Activated CD8-positive, alpha-beta memory T cell treated with anti-CD3 and anti-CD28 coated beads, Interleukin-2, amount 10 ng/mL, durations not matched to agents 7 days and 5 days (primary cell): ENCODE measurements at regions of chr11 and their contacts with region 1.

Region 1: GRCh38 chr11:59158206-59159068 is 13.5 kb upstream of the DTX4 start:
- DNase-seq: peak; percentile 73
- ATAC-seq: peak; percentile 95
- H3K4me3 Mint-ChIP-seq: no peak overlapping the region
- H3K27ac Mint-ChIP-seq: no peak overlapping the region
- H3K4me1 Mint-ChIP-seq: peaks cover 6% of the 10 kb centered on the region
- H3K27me3 Mint-ChIP-seq: peaks cover 16% of the 10 kb centered on the region

Region 2: DNA sequence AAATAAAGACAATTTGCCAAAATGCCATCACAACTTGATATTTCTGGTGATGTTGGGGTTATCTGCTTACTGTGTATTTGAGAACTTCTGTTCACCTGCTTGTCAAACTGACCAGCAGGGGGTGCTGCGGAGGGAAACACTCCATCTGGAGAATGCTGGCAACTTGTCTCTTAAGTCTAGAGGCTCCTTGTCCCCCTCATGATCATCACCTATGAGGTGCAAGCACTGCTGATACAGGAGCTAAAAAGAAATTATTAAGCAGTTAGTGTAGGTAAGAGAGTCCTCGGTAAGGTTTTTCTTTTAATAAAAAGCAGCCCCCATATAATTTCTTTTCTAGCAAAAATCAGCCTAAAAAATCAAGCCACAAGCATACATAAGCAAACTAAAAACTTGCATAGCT is 105.0 kb before region 1 on chr11:
- CTCF ChIA-PET with region 1: interaction called, 16 read pairs
- DNase-seq: peak; percentile 81
- ATAC-seq: peak; percentile 71
- H3K4me3 Mint-ChIP-seq: no peak overlapping the region
- H3K27ac Mint-ChIP-seq: no peak overlapping the region
- H3K4me1 Mint-ChIP-seq: peaks cover 4% of the 10 kb centered on the region
- H3K27me3 Mint-ChIP-seq: peaks cover 36% of the 10 kb centered on the region

Region 3: GRCh38 chr11:59106363-59107336 is 51.8 kb before region 1 on chr11 and contains the start of gene FAM111B:
- CTCF ChIA-PET with region 1: interaction called, 27 read pairs
- DNase-seq: peak; percentile 89
- ATAC-seq: peak; percentile 93
- H3K4me3 Mint-ChIP-seq: peak within 1 kb of the TSS; percentile 81
- H3K27ac Mint-ChIP-seq: peak within 1 kb of the TSS; percentile 80
- H3K4me1 Mint-ChIP-seq: peaks cover 66% of the 10 kb centered on the region
- H3K27me3 Mint-ChIP-seq: peaks cover 6% of the 10 kb centered on the region
- total RNA-seq, gene FAM111B: 42.7 to 46.5 TPM

Region 4: GRCh38 chr11:59135648-59136461 is 22.6 kb before region 1 on chr11:
- CTCF ChIA-PET with region 1: interaction called, 53 read pairs
- DNase-seq: peak; percentile 92
- ATAC-seq: peak; percentile 99
- H3K4me3 Mint-ChIP-seq: peak overlapping the region; percentile 3
- H3K27ac Mint-ChIP-seq: peak overlapping the region; percentile 71
- H3K4me1 Mint-ChIP-seq: peaks cover 22% of the 10 kb centered on the region
- H3K27me3 Mint-ChIP-seq: no peaks in the 10 kb centered on the region

Region 5: DNA sequence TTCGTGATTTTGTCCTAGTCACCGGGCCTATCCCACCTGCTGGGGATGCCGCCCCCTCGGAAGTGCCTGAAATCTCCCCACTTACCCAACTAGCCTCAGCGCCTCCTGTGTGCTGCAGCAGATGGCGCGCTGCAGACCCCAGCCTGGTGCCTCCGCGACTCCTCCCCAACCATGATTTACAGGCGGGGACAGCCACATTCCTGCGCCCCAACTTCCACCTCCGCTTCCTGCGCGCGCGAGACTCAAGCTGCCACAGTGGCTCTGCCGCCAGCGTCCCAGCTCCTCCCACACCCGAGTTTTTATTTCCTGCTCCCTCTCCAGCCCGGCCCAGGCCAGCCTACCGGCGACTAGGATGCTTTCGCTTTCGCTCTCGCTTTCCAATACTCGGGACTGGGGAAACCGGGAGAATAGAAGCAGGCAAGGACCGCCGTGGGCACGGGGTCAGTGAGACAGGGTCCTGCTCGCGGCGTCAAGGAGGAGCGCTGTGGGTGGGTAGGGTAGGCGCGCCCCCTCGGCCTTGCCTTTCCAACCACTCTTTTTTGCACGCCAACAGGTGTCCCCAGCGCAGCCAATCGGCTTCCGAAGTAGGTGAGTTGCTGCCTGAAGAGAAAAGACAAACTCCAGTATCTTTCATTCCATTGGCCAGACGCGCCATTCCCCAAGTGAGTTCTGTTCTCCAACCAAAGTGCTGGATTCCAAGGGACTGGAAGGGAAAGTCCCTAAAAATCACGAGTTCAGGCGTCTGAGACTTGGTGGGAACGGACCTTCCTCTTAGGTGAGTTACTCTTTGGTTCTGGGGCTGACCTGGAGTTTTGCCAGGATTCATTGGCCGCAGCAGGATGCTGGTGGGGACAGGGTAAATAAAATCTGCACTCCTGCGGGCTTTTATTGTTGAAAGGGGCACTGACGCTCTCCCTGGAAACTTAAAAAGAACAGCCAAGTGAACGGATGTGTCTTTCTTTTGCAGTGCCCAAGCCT is 15.6 kb before region 1 on chr11 and contains the start of gene FAM111A:
- CTCF ChIA-PET with region 1: interaction called, 53 read pairs
- DNase-seq: peak; percentile 95
- ATAC-seq: peak; percentile 93
- H3K4me3 Mint-ChIP-seq: peak within 1 kb of the TSS; percentile 96
- H3K27ac Mint-ChIP-seq: peak within 1 kb of the TSS; percentile 97
- H3K4me1 Mint-ChIP-seq: peaks cover 52% of the 10 kb centered on the region
- H3K27me3 Mint-ChIP-seq: no peaks in the 10 kb centered on the region
- total RNA-seq, gene FAM111A: 136 to 152 TPM

Region 6: DNA sequence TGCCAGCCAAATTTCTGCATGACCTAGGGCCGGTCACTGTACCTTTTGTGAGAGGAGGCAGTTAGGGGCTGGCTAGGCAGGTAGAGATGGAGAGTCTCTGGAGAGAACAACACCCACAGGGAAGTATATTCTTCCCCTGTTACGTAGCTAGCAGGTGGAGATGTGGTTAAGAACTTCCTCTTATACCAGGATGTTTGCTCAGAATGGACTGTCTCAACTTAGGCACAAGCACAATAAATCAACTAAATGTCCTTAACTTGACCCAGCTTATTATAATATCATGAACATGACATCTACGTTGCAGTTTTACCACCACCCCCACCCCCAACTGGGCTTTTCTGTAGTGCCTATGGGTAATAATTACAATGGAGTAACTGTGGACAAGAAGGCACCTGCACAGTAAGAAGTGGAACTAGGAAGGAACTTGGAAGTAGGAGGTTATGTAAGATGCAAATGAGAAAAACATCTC is 115.0 kb after region 1 on chr11:
- CTCF ChIA-PET with region 1: no interaction called
- DNase-seq: no peak
- ATAC-seq: peak; percentile 42
- H3K4me3 Mint-ChIP-seq: no peak overlapping the region
- H3K27ac Mint-ChIP-seq: no peak overlapping the region
- H3K4me1 Mint-ChIP-seq: peaks cover 15% of the 10 kb centered on the region
- H3K27me3 Mint-ChIP-seq: peaks cover 3% of the 10 kb centered on the region